ENCODE measurements at regions of chr6 and their contacts with region 1.

Region 1: DNA sequence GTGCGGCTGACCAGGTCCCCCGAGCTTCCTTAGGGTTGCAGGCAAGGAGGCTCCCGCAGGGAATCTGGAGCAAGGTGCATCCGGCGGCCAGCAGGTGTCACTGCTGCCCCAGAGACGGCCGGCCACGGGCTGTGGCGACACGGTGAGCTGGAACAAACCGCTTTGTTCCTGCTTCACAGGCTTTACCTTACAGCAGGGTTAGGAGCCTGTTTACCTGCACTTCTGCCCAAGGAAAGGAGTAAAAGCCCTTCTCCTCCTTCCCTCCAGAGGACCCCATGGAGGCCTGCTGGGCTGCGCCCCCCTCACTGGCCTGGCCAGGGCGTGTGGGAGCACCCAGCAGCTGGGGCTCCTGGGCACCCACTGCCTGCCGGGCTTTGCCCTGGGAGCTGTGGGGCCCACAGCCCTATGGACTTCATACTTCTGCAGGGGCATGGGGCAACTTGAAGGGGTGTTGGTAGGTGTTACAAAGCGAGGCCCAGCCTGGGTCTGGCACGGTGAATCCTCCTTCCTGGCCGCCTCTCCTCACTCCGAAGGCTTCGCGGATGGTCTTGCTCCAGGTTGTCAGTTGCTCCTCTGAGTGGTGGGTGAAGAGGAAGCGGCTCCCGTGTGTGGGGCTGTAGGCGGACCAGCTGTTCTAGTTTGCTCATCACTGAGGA is 88.4 kb downstream of the CDC5L start:
- DNase-seq: peak; percentile 75
- H3K4me3 ChIP-seq: no peak overlapping the region
- H3K27ac ChIP-seq: no peak overlapping the region
- H3K4me1 ChIP-seq: no peaks in the 10 kb centered on the region
- H3K27me3 ChIP-seq: peaks cover 0 to 6% of the 10 kb centered on the region in 2 experiments
- CTCF ChIP-seq: peak; percentile 90 to 97
- POLR2A ChIP-seq: no peak

Region 2: DNA sequence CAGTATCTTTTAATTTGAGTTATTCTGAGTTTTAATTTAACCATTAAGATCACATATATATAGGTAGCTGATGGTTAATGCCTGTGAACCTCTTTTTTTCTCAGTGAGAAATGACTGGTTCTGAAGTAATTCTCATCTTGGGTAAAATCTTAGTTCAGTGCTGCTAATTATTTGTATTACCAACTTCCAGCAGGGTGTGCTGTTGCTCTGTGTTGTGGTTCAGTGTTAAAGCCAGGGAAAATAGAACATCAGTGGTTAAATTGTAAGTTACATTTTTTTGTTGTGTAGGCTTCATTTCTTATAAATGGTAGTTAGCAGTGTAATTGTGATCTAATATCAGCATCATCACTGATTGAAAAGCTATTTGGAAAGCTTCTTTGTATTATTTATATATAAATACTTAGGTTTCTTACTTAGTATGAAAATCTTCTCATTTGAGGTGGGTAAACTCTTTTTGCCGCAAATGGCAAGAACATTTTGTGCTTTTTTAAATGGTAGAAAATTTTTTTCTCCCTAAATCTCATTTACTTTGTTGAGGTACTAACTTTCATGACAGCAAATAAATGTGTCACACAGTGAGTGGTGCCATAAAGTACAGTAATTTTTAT is 44.7 kb before region 1 on chr6:
- CTCF ChIA-PET with region 1: interaction called, 15 read pairs
- POLR2A ChIA-PET with region 1: no interaction called
- dilution Hi-C with region 1: no loop called
- intact Hi-C with region 1: no loop called
- DNase-seq: peak; percentile 73
- H3K4me3 ChIP-seq: no peak overlapping the region
- H3K27ac ChIP-seq: no peak overlapping the region
- H3K4me1 ChIP-seq: no peaks in the 10 kb centered on the region
- H3K27me3 ChIP-seq: no peaks in the 10 kb centered on the region
- CTCF ChIP-seq: peak; percentile 41 to 50
- POLR2A ChIP-seq: no peak

Region 3: GRCh38 chr6:44508646-44509045 is 32.7 kb after region 1 on chr6:
- CTCF ChIA-PET with region 1: interaction called, 16 read pairs
- POLR2A ChIA-PET with region 1: no interaction called
- dilution Hi-C with region 1: no loop called
- intact Hi-C with region 1: no loop called
- DNase-seq: no peak
- H3K4me3 ChIP-seq: no peak overlapping the region
- H3K27ac ChIP-seq: no peak overlapping the region
- H3K4me1 ChIP-seq: no peaks in the 10 kb centered on the region
- H3K27me3 ChIP-seq: peaks cover 0 to 2% of the 10 kb centered on the region in 2 experiments
- CTCF ChIP-seq: no peak
- POLR2A ChIP-seq: no peak

Region 4: GRCh38 chr6:44569931-44570385 is 94.1 kb after region 1 on chr6:
- CTCF ChIA-PET with region 1: interaction called, 19 read pairs
- POLR2A ChIA-PET with region 1: no interaction called
- dilution Hi-C with region 1: no loop called
- intact Hi-C with region 1: no loop called
- DNase-seq: no peak
- H3K4me3 ChIP-seq: no peak overlapping the region
- H3K27ac ChIP-seq: no peak overlapping the region
- H3K4me1 ChIP-seq: no peaks in the 10 kb centered on the region
- H3K27me3 ChIP-seq: no peaks in the 10 kb centered on the region
- CTCF ChIP-seq: no peak
- POLR2A ChIP-seq: no peak

Region 5: GRCh38 chr6:44630125-44631028 is 154.5 kb after region 1 on chr6:
- CTCF ChIA-PET with region 1: interaction called, 81 read pairs
- POLR2A ChIA-PET with region 1: no interaction called
- dilution Hi-C with region 1: no loop called
- intact Hi-C with region 1: loop called (anchors 1 kb)
- DNase-seq: peak; percentile 19
- H3K4me3 ChIP-seq: no peak overlapping the region
- H3K27ac ChIP-seq: no peak overlapping the region
- H3K4me1 ChIP-seq: no peaks in the 10 kb centered on the region
- H3K27me3 ChIP-seq: peaks cover 3 to 4% of the 10 kb centered on the region in 2 experiments
- CTCF ChIP-seq: peak; percentile 13 to 63
- POLR2A ChIP-seq: no peak

Region 6: DNA sequence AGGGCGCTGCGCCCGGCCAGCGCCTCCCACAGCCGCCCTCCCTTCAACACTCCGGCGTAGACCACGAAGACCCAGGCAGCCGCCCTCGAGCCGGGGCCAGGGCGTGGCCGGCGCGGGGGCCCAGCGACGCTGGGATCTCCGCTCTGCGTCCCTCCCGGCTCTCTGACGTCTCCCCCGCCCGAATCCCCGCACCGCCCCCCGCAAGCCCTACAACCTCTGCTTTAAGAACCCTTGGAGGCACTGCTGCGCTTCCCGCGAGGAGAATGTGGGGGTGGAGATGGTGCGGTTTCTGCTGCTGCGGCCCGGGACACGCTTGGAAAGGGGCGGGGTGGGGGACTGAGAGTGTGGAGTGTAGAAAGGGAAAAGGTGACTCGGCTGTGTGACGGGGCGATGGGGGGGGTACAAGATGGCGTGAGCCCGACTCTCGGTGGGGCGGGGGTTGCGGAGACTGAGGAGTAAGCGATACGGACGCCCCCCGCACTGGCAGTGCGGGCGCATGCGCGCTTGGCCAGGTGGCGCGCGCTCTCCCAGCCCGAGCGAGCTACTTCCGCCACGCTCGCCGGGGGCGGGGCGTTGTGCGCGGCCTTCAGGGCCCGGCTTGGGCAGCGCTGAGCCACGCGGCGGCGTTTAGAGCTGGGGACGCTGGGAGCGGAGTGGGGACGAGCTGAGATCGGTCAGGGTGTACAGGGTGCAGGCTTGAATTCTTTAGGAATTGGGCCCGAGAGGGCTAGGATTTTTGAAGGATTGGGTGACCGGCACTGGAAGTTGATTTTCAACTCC is 901.8 kb after region 1 on chr6 and contains the start of gene SUPT3H:
- CTCF ChIA-PET with region 1: interaction called, 14 read pairs
- POLR2A ChIA-PET with region 1: no interaction called
- dilution Hi-C with region 1: no loop called
- intact Hi-C with region 1: no loop called
- DNase-seq: peak; percentile 94
- H3K4me3 ChIP-seq: peak within 1 kb of the TSS; percentile 76 to 92 (median 79)
- H3K27ac ChIP-seq: peak within 1 kb of the TSS; percentile 91
- H3K4me1 ChIP-seq: peaks cover 8% of the 10 kb centered on the region
- H3K27me3 ChIP-seq: no peaks in the 10 kb centered on the region
- CTCF ChIP-seq: peak in 1 of 2 donors; percentile 26
- POLR2A ChIP-seq: peak; percentile 87
- total RNA-seq, gene SUPT3H: 8.4 and 9.8 TPM in 2 replicates

Region 7: GRCh38 chr6:45930420-45931040 is 1454.6 kb after region 1 on chr6:
- CTCF ChIA-PET with region 1: interaction called, 12 read pairs
- POLR2A ChIA-PET with region 1: no interaction called
- dilution Hi-C with region 1: no loop called
- intact Hi-C with region 1: no loop called
- DNase-seq: peak; percentile 67
- H3K4me3 ChIP-seq: no peak overlapping the region
- H3K27ac ChIP-seq: no peak overlapping the region
- H3K4me1 ChIP-seq: no peaks in the 10 kb centered on the region
- H3K27me3 ChIP-seq: peaks cover 0 to 3% of the 10 kb centered on the region in 2 experiments
- CTCF ChIP-seq: peak; percentile 92 to 94
- POLR2A ChIP-seq: no peak

Region 8: GRCh38 chr6:46393940-46394337 is 1918.0 kb after region 1 on chr6:
- CTCF ChIA-PET with region 1: no interaction called
- POLR2A ChIA-PET with region 1: no interaction called
- dilution Hi-C with region 1: no loop called
- intact Hi-C with region 1: no loop called
- DNase-seq: no peak
- H3K4me3 ChIP-seq: no peak overlapping the region
- H3K27ac ChIP-seq: no peak overlapping the region
- H3K4me1 ChIP-seq: no peaks in the 10 kb centered on the region
- H3K27me3 ChIP-seq: no peaks in the 10 kb centered on the region
- CTCF ChIP-seq: no peak
- POLR2A ChIP-seq: no peak

Measured in endothelial cell of umbilical vein (primary cell).